ENCODE measurements at regions of chr5 and their contacts with region 1.

Region 1: GRCh38 chr5:10761166-10761932 is at the start of gene DAP:
- DNase-seq: peak; percentile 89 to 95
- ATAC-seq: peak; percentile 93
- H3K4me3 ChIP-seq: peak within 1 kb of the TSS; percentile 89 to 98
- H3K27ac ChIP-seq: peak within 1 kb of the TSS; percentile 98 to 99
- H3K4me1 ChIP-seq: peaks cover 0 to 2% of the 10 kb centered on the region in 2 donors
- H3K27me3 ChIP-seq: no peaks in the 10 kb centered on the region
- total RNA-seq, gene DAP: 117 to 122 TPM

Region 2: DNA sequence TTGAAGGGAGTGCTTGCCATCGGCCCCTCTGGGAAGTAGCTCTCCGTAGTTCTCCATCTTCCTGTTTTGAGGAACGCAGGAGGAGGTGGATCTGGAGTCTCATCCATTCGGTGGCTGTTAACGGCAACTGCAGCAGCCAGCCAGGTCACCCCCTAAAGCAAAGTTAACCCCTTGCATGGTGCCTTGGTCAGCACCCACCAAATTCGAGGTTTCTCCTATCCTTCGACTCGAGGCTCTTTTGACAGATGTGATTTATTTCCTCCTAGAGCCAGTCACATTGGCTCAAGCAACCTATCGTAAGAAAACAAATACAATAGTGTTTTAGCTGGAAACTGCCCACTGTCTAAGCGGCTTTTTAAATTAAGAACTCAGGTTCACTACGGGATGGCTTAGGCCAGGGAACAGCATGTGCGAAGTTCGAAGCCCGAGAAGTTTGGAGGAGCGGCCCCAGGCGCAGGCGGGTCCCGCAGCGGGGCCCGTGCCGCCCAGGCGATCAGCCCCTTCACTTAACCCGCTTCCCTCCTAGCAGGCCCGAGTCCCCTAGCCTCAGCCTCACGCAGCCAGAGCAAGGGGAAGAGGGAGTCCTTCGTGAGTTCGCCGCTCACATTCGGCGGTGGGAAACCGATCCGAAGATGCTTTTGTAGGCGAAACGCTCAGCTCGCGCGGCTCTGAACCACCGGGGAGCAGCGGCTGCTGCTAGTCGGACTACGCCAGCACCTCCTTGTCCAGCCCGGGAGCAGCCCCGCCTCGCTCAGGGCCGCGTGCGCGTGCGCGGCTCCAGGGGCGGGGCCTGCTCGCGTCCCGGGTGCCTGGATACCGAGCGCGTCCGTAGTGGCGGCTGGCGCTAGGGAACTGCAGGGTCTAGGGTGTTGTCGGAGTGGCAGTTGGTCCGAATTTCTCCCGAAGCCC is 320.0 kb before region 1 on chr5 and contains the start of gene ROPN1L:
- intact Hi-C with region 1: loop called (anchors 5 kb)
- DNase-seq: peak; percentile 92 to 95
- ATAC-seq: peak; percentile 99
- H3K4me3 ChIP-seq: peak within 1 kb of the TSS; percentile 8 to 17
- H3K27ac ChIP-seq: peak within 1 kb of the TSS in 1 of 2 donors; percentile 29
- H3K4me1 ChIP-seq: no peaks in the 10 kb centered on the region
- H3K27me3 ChIP-seq: no peaks in the 10 kb centered on the region
- total RNA-seq, gene ROPN1L: 0.68 TPM in 1 of 2 donors, not detected in the other

Region 3: GRCh38 chr5:10701567-10702039 is 59.7 kb before region 1 on chr5:
- intact Hi-C with region 1: loop called in 1 of 2 experiments (anchors 5 kb)
- DNase-seq: no peak
- ATAC-seq: no peak
- H3K4me3 ChIP-seq: no peak overlapping the region
- H3K27ac ChIP-seq: peak overlapping the region; percentile 2 to 11
- H3K4me1 ChIP-seq: no peaks in the 10 kb centered on the region
- H3K27me3 ChIP-seq: no peaks in the 10 kb centered on the region

Region 4: DNA sequence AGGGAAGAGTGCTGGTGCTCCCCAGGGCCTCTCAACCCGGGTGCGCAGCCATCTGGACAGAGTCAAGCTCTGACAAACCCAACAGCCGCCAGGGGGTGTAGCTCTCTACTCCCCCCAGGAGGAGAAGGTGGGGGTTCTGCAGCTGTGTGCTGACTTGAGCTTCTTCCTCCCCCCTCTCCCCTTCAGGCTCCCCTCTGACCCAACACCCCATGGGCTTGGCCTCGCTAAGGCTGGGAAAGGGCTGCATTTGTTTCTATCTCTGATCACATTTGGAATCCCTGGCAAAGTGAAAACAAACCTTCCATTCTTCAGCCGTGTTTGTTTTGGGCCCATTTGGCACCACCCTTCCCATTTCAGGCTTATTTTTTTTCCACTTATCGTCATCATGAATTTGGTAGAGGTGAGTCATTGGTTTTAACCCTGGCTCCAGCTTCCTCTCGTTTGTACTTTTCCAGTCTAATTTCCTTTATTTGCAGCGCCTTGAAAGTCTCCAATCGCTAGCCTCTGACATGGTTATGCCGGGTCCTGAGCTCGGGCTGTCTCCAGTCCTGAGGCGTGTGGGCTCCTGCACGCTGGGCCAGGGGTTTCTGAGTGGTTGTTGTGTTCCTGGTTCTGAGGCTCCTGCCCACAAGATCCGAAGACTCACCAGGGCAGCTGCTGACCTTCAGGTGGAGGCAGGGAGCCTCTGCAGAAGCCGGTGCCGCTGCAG is 36.4 kb before region 1 on chr5:
- intact Hi-C with region 1: loop called in 1 of 2 experiments (anchors 2 kb)
- DNase-seq: peak; percentile 73 to 80
- ATAC-seq: peak; percentile 82
- H3K4me3 ChIP-seq: no peak overlapping the region
- H3K27ac ChIP-seq: peak overlapping the region; percentile 85 to 86
- H3K4me1 ChIP-seq: no peaks in the 10 kb centered on the region
- H3K27me3 ChIP-seq: no peaks in the 10 kb centered on the region